ENCODE measurements at regions of chr5 and their contacts with region 1.

Region 1: GRCh38 chr5:134370871-134371833 is at the start of gene UBE2B:
- DNase-seq: peak; percentile 98
- H3K4me3 Mint-ChIP-seq: peak within 1 kb of the TSS; percentile 93
- H3K27ac Mint-ChIP-seq: peak within 1 kb of the TSS; percentile 93
- H3K4me1 Mint-ChIP-seq: peaks cover 42% of the 10 kb centered on the region
- H3K27me3 Mint-ChIP-seq: peaks cover 3% of the 10 kb centered on the region
- total RNA-seq, gene UBE2B: 108 and 109 TPM in 2 replicates

Region 2: DNA sequence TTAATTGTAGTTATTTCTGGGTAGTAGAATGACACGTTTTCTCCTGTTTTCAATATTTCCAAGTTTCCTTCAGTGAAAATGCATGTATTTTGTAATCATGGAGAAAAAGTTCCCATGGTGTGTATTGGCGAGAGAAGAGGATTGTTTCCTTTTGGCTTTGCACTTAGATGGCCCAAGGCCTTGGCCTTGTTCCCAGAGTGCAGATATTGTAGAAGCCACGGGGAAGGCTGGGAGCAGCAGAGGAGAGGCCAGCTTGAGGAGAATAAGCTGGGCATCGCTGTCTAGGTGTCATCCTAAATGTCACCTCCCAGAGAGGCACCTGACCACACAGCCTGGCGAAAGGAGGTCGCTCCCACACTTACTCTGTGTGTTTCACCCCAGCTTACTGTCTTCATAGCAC is 1924.5 kb before region 1 on chr5:
- intact Hi-C with region 1: no loop called
- DNase-seq: no peak
- H3K4me3 Mint-ChIP-seq: no peak overlapping the region
- H3K27ac Mint-ChIP-seq: no peak overlapping the region
- H3K4me1 Mint-ChIP-seq: peaks cover 56% of the 10 kb centered on the region
- H3K27me3 Mint-ChIP-seq: no peaks in the 10 kb centered on the region

Region 3: DNA sequence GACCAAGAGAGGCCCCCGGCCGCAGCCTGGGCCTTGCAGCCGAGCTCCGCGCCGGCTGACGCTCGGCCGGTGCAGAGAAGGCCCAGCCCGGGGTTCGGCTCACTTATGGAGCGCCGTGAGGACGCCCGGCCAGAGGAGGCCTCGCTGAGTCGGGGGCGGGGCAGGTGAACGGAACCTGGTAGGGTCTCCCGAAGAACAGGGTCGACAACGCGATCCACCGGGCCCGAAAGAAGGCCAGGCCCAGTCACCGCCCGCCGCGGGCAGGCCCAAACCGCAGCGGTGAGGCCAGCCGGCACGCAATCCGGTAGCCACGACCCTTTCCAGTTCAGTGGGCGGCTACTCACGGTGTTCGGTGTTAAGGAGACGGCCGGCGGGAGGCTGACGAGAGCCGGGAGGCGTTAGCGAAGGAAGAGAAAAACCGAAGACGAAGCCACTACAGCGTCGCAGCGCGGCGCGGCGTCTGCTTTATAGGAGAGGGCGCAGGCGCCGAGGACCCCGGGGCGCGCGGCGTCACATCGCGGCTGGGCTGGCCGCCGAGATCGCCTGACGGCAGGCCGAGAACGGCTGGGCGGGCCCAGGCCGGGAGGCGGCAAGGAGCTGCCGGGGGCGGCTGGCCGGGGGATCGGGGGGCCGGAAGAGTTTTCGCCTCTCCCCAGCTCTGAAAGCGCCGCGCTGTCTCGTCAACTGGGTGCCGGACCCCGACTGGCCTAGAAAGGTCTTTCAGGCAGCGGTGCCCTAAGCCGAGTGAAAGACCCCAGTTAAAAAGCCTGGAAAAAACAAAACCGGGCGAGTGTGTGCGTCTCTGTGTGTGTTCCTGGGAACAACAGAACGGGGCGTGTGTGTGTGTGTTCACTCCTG is 194.4 kb before region 1 on chr5 and contains the start of gene SKP1:
- intact Hi-C with region 1: loop called (anchors 5 kb)
- DNase-seq: peak; percentile 96
- H3K4me3 Mint-ChIP-seq: peak within 1 kb of the TSS; percentile 93
- H3K27ac Mint-ChIP-seq: peak within 1 kb of the TSS; percentile 97
- H3K4me1 Mint-ChIP-seq: peaks cover 21% of the 10 kb centered on the region
- H3K27me3 Mint-ChIP-seq: no peaks in the 10 kb centered on the region
- total RNA-seq, gene SKP1: 266 and 289 TPM in 2 replicates

Region 4: DNA sequence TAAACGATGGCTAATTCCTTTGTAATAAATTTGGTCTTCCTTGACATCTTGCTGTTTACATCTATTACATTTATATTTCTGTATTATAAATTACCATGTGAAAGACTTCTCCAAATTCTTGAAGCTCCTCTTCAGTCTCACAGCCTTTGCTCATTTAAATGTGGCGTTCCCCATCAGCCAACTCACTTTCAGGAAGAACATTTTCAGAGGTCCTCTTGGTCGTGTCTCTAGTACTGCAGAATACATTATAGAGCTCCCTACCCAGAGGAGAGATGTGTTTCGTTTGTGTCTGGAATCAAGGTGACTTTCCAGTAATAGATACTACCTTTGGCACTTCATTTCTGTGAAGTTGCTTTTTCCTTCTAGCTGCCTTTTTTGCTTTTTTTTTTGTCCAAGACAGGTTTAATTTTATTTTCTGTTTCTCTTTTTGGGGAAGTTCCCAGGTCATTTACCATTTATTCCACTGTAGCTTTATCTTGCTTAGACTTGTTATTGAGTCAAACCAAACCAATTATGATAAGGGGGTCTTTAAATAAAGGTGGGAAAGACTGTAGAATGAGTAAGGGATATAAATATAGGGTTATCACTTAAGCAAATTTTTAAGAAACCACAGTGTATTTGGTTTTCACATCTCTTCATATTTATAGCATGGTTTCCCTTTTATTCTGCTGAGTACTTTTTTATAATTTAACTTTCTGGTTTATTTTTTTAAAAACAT is 13.0 kb after region 1 on chr5:
- intact Hi-C with region 1: no loop called
- DNase-seq: no peak
- H3K4me3 Mint-ChIP-seq: peak overlapping the region; percentile 52
- H3K27ac Mint-ChIP-seq: peak overlapping the region; percentile 85
- H3K4me1 Mint-ChIP-seq: peaks cover 21% of the 10 kb centered on the region
- H3K27me3 Mint-ChIP-seq: no peaks in the 10 kb centered on the region

Region 5: GRCh38 chr5:134541736-134542376 is 170.7 kb after region 1 on chr5:
- intact Hi-C with region 1: loop called (anchors 5 kb)
- DNase-seq: peak; percentile 65
- H3K4me3 Mint-ChIP-seq: no peak overlapping the region
- H3K27ac Mint-ChIP-seq: no peak overlapping the region
- H3K4me1 Mint-ChIP-seq: peaks cover 45% of the 10 kb centered on the region
- H3K27me3 Mint-ChIP-seq: no peaks in the 10 kb centered on the region

Region 6: GRCh38 chr5:134648425-134649162 is 277.4 kb after region 1 on chr5 and contains the start of gene SEC24A:
- intact Hi-C with region 1: loop called (anchors 1 kb)
- DNase-seq: peak; percentile 97
- H3K4me3 Mint-ChIP-seq: peak within 1 kb of the TSS; percentile 94
- H3K27ac Mint-ChIP-seq: peak within 1 kb of the TSS; percentile 97
- H3K4me1 Mint-ChIP-seq: peaks cover 23% of the 10 kb centered on the region
- H3K27me3 Mint-ChIP-seq: no peaks in the 10 kb centered on the region
- total RNA-seq, gene SEC24A: 29.4 and 31.2 TPM in 2 replicates

Region 7: DNA sequence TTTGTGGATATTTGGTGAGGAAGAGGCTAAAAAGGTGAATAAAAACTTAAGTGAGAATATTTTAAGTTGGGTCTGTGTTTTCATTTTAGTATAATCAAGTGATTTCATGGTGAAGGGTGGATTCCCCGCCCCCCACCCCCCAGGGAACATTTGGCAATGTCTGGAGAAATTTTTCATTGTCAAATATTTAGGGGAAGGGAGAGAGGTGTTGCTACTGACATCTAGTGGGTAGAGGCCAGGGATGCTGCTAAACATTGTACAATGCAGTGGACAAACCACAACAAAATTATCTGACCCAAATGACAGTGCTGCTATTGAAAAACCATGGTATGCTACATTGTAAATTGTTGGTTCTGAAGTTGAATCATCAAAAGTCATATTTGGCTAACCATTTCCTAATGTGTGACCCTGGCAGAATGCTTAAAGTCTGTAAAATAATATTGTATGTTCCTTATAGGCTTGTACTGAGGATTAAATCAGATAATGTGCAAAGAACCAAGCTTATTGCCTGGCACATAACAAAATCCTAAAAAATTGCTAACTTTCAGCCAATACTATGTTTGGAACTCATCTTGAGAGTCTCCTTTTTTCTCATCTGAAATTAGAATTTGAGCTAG is 480.3 kb after region 1 on chr5:
- intact Hi-C with region 1: no loop called
- DNase-seq: no peak
- H3K4me3 Mint-ChIP-seq: no peak overlapping the region
- H3K27ac Mint-ChIP-seq: no peak overlapping the region
- H3K4me1 Mint-ChIP-seq: peaks cover 27% of the 10 kb centered on the region
- H3K27me3 Mint-ChIP-seq: no peaks in the 10 kb centered on the region